ENCODE measurements at regions of chr15 and their contacts with region 1.

Region 1: DNA sequence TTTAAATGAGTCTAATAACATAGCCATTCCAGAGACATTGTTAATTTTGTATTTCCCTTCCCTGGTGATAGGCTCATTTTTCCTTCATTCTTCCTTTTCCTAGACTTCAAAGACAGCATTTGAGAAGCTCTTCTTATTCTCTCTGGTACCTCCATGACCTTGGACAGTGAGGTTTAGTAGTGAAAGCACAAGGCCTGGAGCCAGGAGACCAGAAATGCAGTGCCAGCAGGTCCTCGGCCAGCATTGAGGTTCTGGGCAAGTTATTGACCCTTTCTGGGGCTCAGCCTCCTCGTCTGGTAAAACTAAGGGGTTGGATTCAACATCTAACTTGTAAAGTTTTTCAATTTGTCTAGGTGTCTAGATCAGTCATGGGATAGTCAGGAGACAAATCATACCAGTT is 146.9 kb downstream of the SV2B start:
- DNase-seq: no peak
- ATAC-seq: no peak
- H3K4me3 Mint-ChIP-seq: no peak overlapping the region
- H3K27ac Mint-ChIP-seq: no peak overlapping the region
- H3K4me1 Mint-ChIP-seq: no peaks in the 10 kb centered on the region
- H3K27me3 Mint-ChIP-seq: peaks cover 3% of the 10 kb centered on the region
- CTCF ChIP-seq: no peak

Region 2: GRCh38 chr15:91214675-91215590 is 32.1 kb before region 1 on chr15:
- CTCF ChIA-PET with region 1: interaction called, 10 read pairs
- POLR2A ChIA-PET with region 1: no interaction called
- intact Hi-C with region 1: no loop called
- DNase-seq: no peak
- ATAC-seq: no peak
- H3K4me3 Mint-ChIP-seq: no peak overlapping the region
- H3K27ac Mint-ChIP-seq: no peak overlapping the region
- H3K4me1 Mint-ChIP-seq: no peaks in the 10 kb centered on the region
- H3K27me3 Mint-ChIP-seq: peaks cover 16% of the 10 kb centered on the region
- CTCF ChIP-seq: no peak

Region 3: GRCh38 chr15:91258425-91258779 is 11.4 kb after region 1 on chr15:
- CTCF ChIA-PET with region 1: interaction called, 35 read pairs
- POLR2A ChIA-PET with region 1: no interaction called
- intact Hi-C with region 1: no loop called
- DNase-seq: peak; percentile 22
- ATAC-seq: peak; percentile 49
- H3K4me3 Mint-ChIP-seq: no peak overlapping the region
- H3K27ac Mint-ChIP-seq: no peak overlapping the region
- H3K4me1 Mint-ChIP-seq: no peaks in the 10 kb centered on the region
- H3K27me3 Mint-ChIP-seq: peaks cover 17% of the 10 kb centered on the region
- CTCF ChIP-seq: no peak

Region 4: DNA sequence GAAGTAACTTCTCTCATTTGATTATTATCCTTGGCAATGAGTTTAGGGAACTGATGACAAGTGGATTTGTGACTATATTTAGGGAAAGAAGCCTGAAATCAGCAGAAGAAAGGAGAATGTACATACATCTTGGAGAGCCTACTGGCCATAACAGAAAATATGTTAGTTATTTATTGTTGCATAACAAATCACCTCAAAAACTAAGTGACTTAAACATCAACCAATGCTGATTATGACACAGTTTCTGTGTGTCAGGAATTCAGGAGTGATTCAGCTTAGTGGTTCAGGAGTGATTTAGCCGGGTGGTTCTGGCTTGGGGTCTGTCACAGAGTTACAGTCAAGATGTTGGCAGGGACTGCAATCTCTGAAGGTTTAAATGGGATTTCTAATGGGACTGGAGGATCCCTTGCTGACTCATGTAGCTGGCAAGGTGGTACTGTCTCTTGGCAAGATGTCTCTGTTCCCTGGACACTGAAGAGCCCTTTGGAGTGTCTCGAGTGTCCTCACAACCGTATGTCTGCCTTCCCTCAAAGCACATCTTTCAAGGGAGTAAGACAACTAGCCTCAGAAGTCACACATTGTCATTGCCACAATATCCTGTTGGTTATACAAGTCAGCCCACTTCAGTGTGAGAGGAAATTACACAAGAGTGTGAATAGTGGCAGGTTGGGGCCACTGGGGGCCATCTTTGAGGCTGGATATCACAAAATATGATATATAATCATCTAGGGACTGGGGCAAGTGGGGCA is 101.9 kb after region 1 on chr15:
- CTCF ChIA-PET with region 1: no interaction called
- POLR2A ChIA-PET with region 1: no interaction called
- intact Hi-C with region 1: no loop called
- DNase-seq: peak; percentile 27
- ATAC-seq: peak; percentile 64
- H3K4me3 Mint-ChIP-seq: no peak overlapping the region
- H3K27ac Mint-ChIP-seq: no peak overlapping the region
- H3K4me1 Mint-ChIP-seq: peaks cover 12% of the 10 kb centered on the region
- H3K27me3 Mint-ChIP-seq: peaks cover 3% of the 10 kb centered on the region
- CTCF ChIP-seq: no peak

Region 5: DNA sequence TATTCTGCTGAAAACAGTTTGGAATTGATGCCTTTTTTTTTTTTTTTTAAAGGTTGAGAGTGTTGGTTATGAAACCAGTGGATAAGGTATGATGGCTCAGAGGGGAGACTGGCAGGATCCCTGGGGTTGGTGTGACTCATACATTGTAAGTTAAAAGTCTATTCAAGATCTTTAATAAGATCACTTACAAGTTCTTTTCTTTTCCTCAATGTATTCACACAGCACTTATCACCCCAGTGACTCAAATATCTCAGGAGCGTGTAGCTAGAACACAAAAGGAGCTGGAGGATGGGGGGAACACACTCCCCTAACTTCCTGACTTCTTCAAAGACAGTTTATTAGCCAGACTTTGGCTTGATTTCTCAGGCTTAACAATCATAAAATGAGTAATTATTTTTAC is 138.3 kb after region 1 on chr15:
- CTCF ChIA-PET with region 1: no interaction called
- POLR2A ChIA-PET with region 1: no interaction called
- intact Hi-C with region 1: no loop called
- DNase-seq: no peak
- ATAC-seq: no peak
- H3K4me3 Mint-ChIP-seq: no peak overlapping the region
- H3K27ac Mint-ChIP-seq: no peak overlapping the region
- H3K4me1 Mint-ChIP-seq: no peaks in the 10 kb centered on the region
- H3K27me3 Mint-ChIP-seq: peaks cover 1% of the 10 kb centered on the region
- CTCF ChIP-seq: no peak